ENCODE measurements at regions of chr17 and their contacts with region 1.

Region 1: GRCh38 chr17:49763735-49764558 is at the start of gene FAM117A:
- DNase-seq: peak; percentile 86 to 99 (median 98)
- ATAC-seq: peak; percentile 90
- H3K4me3 Mint-ChIP-seq: peak within 1 kb of the TSS; percentile 90 to 99 (median 94)
- H3K27ac Mint-ChIP-seq: peak within 1 kb of the TSS; percentile 83 to 98 (median 95)
- H3K4me1 Mint-ChIP-seq: peaks cover 27 to 56% (median 48%) of the 10 kb centered on the region in 4 donors
- H3K27me3 Mint-ChIP-seq: no peaks in the 10 kb centered on the region
- polyA plus RNA-seq, gene FAM117A: 36.9 to 53.6 (median 46.7) TPM

Region 2: GRCh38 chr17:49707608-49708514 is 56.1 kb before region 1 on chr17 and contains the start of gene SLC35B1:
- POLR2A ChIA-PET with region 1: interaction called, 92 read pairs
- DNase-seq: peak; percentile 94 to 99 (median 98)
- ATAC-seq: peak; percentile 97 to 98
- H3K4me3 Mint-ChIP-seq: peak within 1 kb of the TSS; percentile 89 to 99 (median 94)
- H3K27ac Mint-ChIP-seq: peak within 1 kb of the TSS; percentile 96 to 100 (median 98)
- H3K4me1 Mint-ChIP-seq: peaks cover 18 to 48% (median 47%) of the 10 kb centered on the region in 4 donors
- H3K27me3 Mint-ChIP-seq: no peaks in the 10 kb centered on the region
- polyA plus RNA-seq, gene SLC35B1: 20.3 to 27.4 (median 21.8) TPM

Region 3: DNA sequence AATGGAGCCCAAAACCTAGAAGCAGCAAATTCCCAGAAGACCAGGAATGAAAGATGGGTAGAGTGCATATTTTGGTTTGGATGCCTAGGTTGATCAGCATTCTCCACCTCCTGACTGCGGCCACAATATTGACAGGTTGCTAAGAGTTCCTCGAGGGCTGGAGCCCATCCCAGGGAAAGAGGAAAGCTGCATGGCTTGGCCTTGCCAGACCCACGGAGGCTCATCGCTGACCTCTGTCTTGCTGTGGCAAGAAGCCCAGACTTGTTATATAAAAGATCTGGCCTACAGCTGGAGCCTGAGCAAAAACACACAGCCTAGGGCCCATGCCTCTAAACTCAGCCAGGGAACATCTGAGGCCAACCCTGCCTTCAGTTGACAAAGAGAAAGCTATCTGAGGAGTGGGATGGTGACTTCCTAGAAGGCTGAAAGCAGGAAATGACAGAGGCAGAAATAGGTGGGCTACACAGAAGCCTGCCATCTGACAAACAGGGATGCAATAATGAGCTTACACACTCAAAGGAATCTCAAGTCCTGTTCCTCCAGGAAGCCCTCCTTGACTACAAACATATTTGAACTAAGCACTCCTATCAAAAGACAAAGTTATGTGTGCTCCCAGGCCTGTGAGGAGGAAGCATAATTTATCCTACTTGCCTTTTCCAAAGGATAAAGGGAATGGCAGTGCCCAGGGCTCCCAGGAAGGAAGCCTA is 33.7 kb before region 1 on chr17:
- POLR2A ChIA-PET with region 1: interaction called, 14 read pairs
- DNase-seq: no peak
- ATAC-seq: no peak
- H3K4me3 Mint-ChIP-seq: no peak overlapping the region
- H3K27ac Mint-ChIP-seq: peak overlapping the region in 9 of 10 donors; percentile 43 to 90 (median 69)
- H3K4me1 Mint-ChIP-seq: peaks cover 26 to 79% (median 69%) of the 10 kb centered on the region in 4 donors
- H3K27me3 Mint-ChIP-seq: no peaks in the 10 kb centered on the region

Region 4: GRCh38 chr17:49748791-49749190 is 15.2 kb before region 1 on chr17:
- POLR2A ChIA-PET with region 1: interaction called, 277 read pairs
- DNase-seq: peak in 9 of 10 donors; percentile 34 to 64 (median 53)
- ATAC-seq: peak; percentile 67 to 78
- H3K4me3 Mint-ChIP-seq: peak overlapping the region; percentile 56 to 89 (median 81)
- H3K27ac Mint-ChIP-seq: peak overlapping the region; percentile 94 to 100 (median 96)
- H3K4me1 Mint-ChIP-seq: peaks cover 50 to 96% (median 80%) of the 10 kb centered on the region in 4 donors
- H3K27me3 Mint-ChIP-seq: no peaks in the 10 kb centered on the region

Region 5: GRCh38 chr17:49788478-49789242 is 24.7 kb after region 1 on chr17 and contains the start of gene KAT7:
- POLR2A ChIA-PET with region 1: interaction called, 63 read pairs
- DNase-seq: peak; percentile 94 to 99 (median 99)
- ATAC-seq: peak; percentile 84 to 85
- H3K4me3 Mint-ChIP-seq: peak within 1 kb of the TSS; percentile 90 to 99 (median 97)
- H3K27ac Mint-ChIP-seq: peak within 1 kb of the TSS; percentile 94 to 100 (median 98)
- H3K4me1 Mint-ChIP-seq: peaks cover 18 to 63% (median 53%) of the 10 kb centered on the region in 4 donors
- H3K27me3 Mint-ChIP-seq: no peaks in the 10 kb centered on the region
- polyA plus RNA-seq, gene KAT7: 34.4 to 51.1 (median 39.2) TPM